Uterus (tissue), 4 donors: ENCODE measurements at regions of chr6 and their contacts with region 1.

Region 1: GRCh38 chr6:34610819-34611477 is 54.8 kb upstream of the SPDEF start:
- DNase-seq: no peak
- H3K4me3 ChIP-seq: no peak overlapping the region
- H3K27ac ChIP-seq: peak overlapping the region; percentile 33 to 70
- H3K4me1 ChIP-seq: no peaks in the 10 kb centered on the region
- H3K27me3 ChIP-seq: no peaks in the 10 kb centered on the region
- CTCF ChIP-seq: no peak
- POLR2A ChIP-seq: no peak

Region 2: DNA sequence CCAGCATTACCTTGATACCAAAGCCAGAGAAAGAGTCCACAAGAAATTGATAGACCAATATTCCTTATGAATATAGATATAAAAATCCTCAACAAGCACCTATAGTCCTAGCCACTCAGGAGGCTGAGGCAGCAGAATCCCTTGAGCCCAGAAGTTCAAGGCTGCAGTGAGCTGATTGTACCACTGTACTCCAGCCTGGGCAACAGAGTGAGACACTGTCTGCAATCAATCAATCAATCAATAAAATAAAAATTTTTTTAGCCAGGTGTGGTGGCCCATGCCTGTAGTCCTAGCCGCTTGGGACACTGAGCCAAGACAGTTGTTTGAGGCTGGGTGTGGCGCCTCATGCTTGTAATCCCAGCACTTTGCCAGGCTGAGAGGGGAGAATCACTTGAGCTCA is 343.2 kb before region 1 on chr6:
- intact Hi-C with region 1: no loop called
- DNase-seq: no peak
- H3K4me3 ChIP-seq: no peak overlapping the region
- H3K27ac ChIP-seq: no peak overlapping the region
- H3K4me1 ChIP-seq: no peaks in the 10 kb centered on the region
- H3K27me3 ChIP-seq: no peaks in the 10 kb centered on the region
- CTCF ChIP-seq: no peak
- POLR2A ChIP-seq: no peak

Region 3: GRCh38 chr6:34484899-34485298 is 126.0 kb before region 1 on chr6:
- intact Hi-C with region 1: no loop called
- DNase-seq: no peak
- H3K4me3 ChIP-seq: no peak overlapping the region
- H3K27ac ChIP-seq: no peak overlapping the region
- H3K4me1 ChIP-seq: no peaks in the 10 kb centered on the region
- H3K27me3 ChIP-seq: no peaks in the 10 kb centered on the region
- CTCF ChIP-seq: no peak
- POLR2A ChIP-seq: no peak

Region 4: GRCh38 chr6:34529662-34530327 is 81.2 kb before region 1 on chr6:
- intact Hi-C with region 1: loop called (anchors 2 kb)
- DNase-seq: no peak
- H3K4me3 ChIP-seq: no peak overlapping the region
- H3K27ac ChIP-seq: no peak overlapping the region
- H3K4me1 ChIP-seq: no peaks in the 10 kb centered on the region
- H3K27me3 ChIP-seq: no peaks in the 10 kb centered on the region
- CTCF ChIP-seq: no peak
- POLR2A ChIP-seq: no peak

Region 5: DNA sequence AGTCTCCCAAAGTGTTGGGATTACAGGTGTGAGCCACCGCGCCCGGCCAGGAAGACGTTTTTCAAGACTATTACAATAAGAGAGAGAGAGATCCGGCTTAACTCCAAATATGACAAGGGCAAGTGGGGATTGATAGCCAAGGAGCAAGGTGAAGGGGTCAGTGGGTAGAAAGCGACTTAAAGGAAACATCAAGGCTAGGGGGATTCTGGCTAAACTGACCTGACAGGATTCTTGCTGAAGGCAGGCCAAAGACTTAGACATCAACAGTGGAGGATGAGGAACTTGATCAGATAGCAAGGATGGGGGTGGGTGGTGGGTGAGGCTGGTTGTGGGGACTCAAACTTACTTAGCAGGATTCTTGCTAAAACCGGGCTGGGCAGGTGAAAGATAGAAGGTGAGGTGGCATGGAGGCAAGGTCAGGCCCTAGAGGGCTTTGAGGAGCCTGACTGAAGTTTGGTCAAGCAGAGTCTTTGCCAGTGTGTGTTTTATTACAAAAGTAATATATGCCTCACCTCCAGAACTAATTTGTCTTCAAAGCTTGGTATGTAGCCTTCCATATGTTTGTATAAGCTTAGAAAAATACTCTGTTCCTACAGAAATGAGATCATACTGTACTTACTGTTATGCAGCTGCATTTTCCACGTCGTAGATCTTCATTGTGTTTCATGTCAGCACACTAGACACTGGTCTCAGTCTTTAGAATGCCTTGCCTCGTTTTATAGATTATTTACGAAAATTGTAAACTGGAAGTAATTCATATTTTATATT is 339.7 kb after region 1 on chr6:
- intact Hi-C with region 1: no loop called
- DNase-seq: no peak
- H3K4me3 ChIP-seq: no peak overlapping the region
- H3K27ac ChIP-seq: no peak overlapping the region
- H3K4me1 ChIP-seq: no peaks in the 10 kb centered on the region
- H3K27me3 ChIP-seq: no peaks in the 10 kb centered on the region
- CTCF ChIP-seq: no peak
- POLR2A ChIP-seq: no peak